CD8-positive, alpha-beta T cell (primary cell): ENCODE measurements at regions of chr6 and their contacts with region 1.

Region 1: DNA sequence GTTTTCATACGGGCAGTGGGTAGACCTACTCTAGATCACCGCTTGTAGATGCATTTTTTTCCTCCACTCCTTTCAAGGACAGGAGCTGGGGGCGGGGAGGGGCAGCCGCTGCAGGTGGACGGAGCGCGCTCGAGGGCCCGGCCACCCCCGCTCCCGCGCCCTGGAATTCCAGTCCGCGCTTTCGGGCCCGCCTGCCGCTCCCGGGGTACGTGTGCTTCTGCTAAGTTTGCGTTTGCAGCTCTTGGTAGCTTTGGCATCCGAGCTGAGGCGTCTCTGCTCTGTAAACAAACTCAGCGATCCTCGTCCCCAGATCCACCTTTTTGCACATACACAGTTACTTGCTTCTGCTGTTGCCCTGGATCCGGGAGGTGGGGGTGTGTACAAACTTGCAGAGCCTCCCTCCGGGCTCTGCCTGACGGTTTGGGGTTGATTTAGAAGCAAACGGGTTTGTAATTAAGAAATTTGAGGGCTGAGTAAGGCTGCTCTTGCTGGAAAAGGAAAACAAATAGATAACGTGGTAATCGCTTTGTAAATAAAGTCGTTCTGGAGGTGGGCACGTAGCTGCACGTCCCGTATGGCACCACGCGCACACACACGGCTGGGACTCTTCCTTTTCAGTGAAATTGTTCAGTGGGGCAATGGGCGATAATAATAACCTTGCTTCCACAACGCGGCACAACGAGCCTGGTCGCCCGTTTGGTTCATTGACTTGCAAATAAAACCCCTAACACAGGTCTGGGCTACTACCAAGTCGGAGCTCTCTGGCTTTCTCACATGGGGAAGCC is 976 bp upstream of the CITED2 start:
- DNase-seq: peak; percentile 71 to 93 (median 83)
- ATAC-seq: peak; percentile 63
- H3K4me3 ChIP-seq: peak overlapping the region; percentile 92 to 93
- H3K4me3 Mint-ChIP-seq: peak overlapping the region; percentile 98
- H3K27ac ChIP-seq: peak overlapping the region; percentile 76 to 94
- H3K27ac Mint-ChIP-seq: peak overlapping the region; percentile 95
- H3K4me1 ChIP-seq: peaks cover 22% of the 10 kb centered on the region
- H3K4me1 Mint-ChIP-seq: peaks cover 26% of the 10 kb centered on the region
- H3K27me3 ChIP-seq: no peaks in the 10 kb centered on the region
- H3K27me3 Mint-ChIP-seq: no peaks in the 10 kb centered on the region
- CTCF ChIP-seq: no peak

Region 2: GRCh38 chr6:138987640-138988468 is 387.6 kb before region 1 on chr6 and contains the start of gene REPS1:
- CTCF ChIA-PET with region 1: interaction called, 18 read pairs
- POLR2A ChIA-PET with region 1: interaction called, 12 read pairs
- intact Hi-C with region 1: loop called in 1 of 2 experiments (anchors 1 kb)
- DNase-seq: peak; percentile 79 to 97 (median 90)
- ATAC-seq: peak; percentile 88
- H3K4me3 ChIP-seq: peak within 1 kb of the TSS; percentile 74 to 79
- H3K4me3 Mint-ChIP-seq: peak within 1 kb of the TSS; percentile 86
- H3K27ac ChIP-seq: peak within 1 kb of the TSS; percentile 68 to 81
- H3K27ac Mint-ChIP-seq: peak within 1 kb of the TSS; percentile 85
- H3K4me1 ChIP-seq: peaks cover 42% of the 10 kb centered on the region
- H3K4me1 Mint-ChIP-seq: peaks cover 6% of the 10 kb centered on the region
- H3K27me3 ChIP-seq: no peaks in the 10 kb centered on the region
- H3K27me3 Mint-ChIP-seq: no peaks in the 10 kb centered on the region
- CTCF ChIP-seq: peak; percentile 99
- total RNA-seq, gene REPS1: 50.4 to 60.3 TPM

Region 3: DNA sequence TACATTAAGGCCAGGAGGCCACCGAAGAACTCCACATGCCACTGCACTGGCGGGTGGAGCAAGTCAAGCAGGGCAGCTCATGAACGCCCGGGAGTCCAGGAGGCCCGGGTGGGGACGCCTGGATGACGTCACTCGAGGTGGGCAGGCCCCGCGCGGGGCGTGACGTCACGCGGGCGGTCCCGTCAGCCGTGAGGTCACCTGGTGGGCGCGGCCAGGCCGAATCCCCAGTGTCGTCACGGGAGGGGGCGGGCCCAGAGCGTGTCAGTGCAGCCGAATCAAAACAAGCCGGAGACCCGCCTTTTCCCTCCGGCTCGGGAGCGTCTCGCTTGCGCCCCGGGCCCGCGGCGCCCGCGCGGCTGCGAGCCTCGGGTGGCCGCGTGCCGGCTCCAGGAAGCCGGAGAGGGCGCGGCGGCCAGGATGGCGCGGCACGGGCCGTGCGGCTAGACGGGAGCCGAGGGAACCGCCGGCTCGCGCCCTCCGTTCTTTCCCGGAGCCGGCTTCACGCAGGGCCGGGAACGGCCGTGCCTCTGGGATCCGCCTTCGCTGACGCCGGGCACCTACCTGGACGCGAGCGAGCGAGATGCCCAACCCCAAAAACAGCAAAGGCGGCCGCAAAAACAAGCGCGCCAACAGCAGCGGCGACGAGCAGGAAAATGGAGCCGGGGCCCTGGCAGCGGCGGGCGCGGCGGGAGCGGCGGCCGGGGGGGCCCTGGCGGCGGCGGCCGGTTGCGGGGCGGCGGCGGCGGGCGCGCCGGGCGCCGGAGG is 240.4 kb before region 1 on chr6 and contains the start of gene HECA:
- CTCF ChIA-PET with region 1: interaction called, 10 read pairs
- POLR2A ChIA-PET with region 1: interaction called, 33 read pairs
- intact Hi-C with region 1: loop called (anchors 1 kb)
- DNase-seq: peak; percentile 98 to 100 (median 99)
- ATAC-seq: peak; percentile 81
- H3K4me3 ChIP-seq: peak within 1 kb of the TSS; percentile 79 to 84
- H3K4me3 Mint-ChIP-seq: peak within 1 kb of the TSS; percentile 91
- H3K27ac ChIP-seq: peak within 1 kb of the TSS; percentile 96 to 97
- H3K27ac Mint-ChIP-seq: peak within 1 kb of the TSS; percentile 98
- H3K4me1 ChIP-seq: peaks cover 55% of the 10 kb centered on the region
- H3K4me1 Mint-ChIP-seq: peaks cover 67% of the 10 kb centered on the region
- H3K27me3 ChIP-seq: no peaks in the 10 kb centered on the region
- H3K27me3 Mint-ChIP-seq: no peaks in the 10 kb centered on the region
- CTCF ChIP-seq: no peak
- total RNA-seq, gene HECA: 231 to 234 TPM

Region 4: DNA sequence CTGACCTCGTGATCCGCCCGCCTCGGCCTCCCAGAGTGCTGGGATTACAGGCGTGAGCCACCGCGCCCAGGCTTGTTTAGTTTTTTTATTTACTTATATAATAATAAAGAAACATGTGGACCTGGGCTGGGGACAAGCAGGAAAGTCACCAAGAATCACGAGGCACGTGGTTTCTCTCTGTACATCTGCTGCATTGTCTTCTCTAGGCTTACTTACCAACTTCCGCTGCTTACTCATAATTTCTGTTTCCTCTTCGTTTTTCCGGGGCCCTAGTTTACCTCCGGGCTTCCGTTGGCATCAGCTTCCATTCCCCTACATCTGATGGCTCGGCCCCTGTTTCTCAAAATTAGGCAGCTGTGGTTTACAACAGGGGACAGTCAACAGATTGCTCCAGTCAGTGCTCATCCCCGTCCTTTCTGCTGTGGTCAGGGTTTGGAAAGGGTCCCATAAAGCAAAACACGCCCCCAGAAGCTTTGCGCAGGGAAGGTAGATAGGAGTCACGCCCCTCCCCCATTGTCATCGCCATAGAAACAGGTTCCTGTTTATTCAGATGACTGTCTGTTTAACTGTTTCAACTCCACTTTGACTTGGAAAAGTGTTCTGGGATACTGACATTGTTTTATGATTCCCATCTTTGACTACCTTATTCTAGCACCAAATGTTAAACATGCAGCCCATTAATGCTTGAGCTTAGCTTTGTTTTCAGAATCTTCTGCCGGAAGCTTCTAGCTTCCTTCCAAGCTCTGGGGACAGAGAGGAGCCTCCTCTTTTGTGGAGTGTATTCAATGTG is 51.7 kb before region 1 on chr6:
- CTCF ChIA-PET with region 1: interaction called, 7 read pairs
- POLR2A ChIA-PET with region 1: interaction called, 13 read pairs
- intact Hi-C with region 1: loop called in 1 of 2 experiments (anchors 2 kb)
- DNase-seq: peak; percentile 56 to 91 (median 84)
- ATAC-seq: peak; percentile 87
- H3K4me3 ChIP-seq: peak overlapping the region; percentile 54 to 59
- H3K4me3 Mint-ChIP-seq: peak overlapping the region; percentile 89
- H3K27ac ChIP-seq: peak overlapping the region; percentile 82 to 97
- H3K27ac Mint-ChIP-seq: peak overlapping the region; percentile 97
- H3K4me1 ChIP-seq: peaks cover 18% of the 10 kb centered on the region
- H3K4me1 Mint-ChIP-seq: peaks cover 35% of the 10 kb centered on the region
- H3K27me3 ChIP-seq: no peaks in the 10 kb centered on the region
- H3K27me3 Mint-ChIP-seq: no peaks in the 10 kb centered on the region
- CTCF ChIP-seq: no peak

Region 5: DNA sequence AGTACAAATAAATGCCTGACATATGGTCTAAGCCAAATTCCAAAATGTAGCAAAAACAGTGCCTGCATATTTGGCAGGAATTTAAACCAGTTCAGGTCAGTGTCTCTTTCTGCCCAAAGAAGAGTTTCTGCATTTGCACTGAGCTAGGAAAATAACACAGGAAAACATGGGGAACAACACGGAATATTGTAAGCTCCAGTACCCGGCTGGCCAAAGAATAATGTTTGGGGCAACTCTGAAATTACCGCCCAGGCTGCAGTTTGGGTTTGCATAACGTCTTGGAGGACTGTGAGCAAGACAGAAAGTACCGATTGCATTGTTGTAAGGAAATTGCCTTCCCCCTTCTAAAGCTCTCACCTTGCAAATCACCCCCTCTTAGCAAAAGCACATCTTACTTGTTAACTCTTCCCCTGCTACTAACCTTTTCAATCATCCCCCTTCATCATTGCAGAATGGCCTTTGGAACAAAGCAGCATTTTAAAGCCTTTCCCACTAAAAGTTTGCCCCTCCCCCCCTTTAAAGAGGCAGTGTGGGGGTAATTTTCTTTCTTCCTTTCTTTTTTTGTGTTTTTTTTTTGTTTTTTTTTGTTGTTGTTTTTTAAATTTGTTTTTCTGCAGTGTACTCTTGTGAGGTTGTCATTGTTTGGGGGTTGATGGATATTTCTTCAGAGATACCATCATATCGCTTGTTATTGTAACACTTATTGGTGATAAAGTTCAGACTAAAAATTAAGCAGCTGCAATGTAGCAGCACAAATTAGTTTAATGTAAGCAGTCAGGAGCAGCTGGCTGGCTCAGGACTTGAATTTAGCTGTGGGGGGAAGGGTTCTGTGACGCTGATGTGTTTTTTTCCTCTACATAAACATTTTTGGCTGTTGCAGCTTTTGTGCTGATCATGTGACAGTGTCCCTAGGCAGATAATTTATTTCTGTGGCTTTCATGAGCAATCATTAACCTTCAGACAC is 99.0 kb after region 1 on chr6:
- CTCF ChIA-PET with region 1: no interaction called
- POLR2A ChIA-PET with region 1: no interaction called
- intact Hi-C with region 1: no loop called
- DNase-seq: no peak
- ATAC-seq: no peak
- H3K4me3 ChIP-seq: no peak overlapping the region
- H3K4me3 Mint-ChIP-seq: no peak overlapping the region
- H3K27ac ChIP-seq: no peak overlapping the region
- H3K27ac Mint-ChIP-seq: no peak overlapping the region
- H3K4me1 ChIP-seq: no peaks in the 10 kb centered on the region
- H3K4me1 Mint-ChIP-seq: peaks cover 4% of the 10 kb centered on the region
- H3K27me3 ChIP-seq: no peaks in the 10 kb centered on the region
- H3K27me3 Mint-ChIP-seq: no peaks in the 10 kb centered on the region
- CTCF ChIP-seq: no peak

Region 6: GRCh38 chr6:139540276-139540675 is 164.9 kb after region 1 on chr6:
- CTCF ChIA-PET with region 1: interaction called, 3 read pairs
- POLR2A ChIA-PET with region 1: interaction called, 18 read pairs
- intact Hi-C with region 1: no loop called
- DNase-seq: peak; percentile 8 to 74 (median 48)
- ATAC-seq: peak; percentile 89
- H3K4me3 ChIP-seq: peak overlapping the region in 1 of 2 experiments; percentile 9
- H3K4me3 Mint-ChIP-seq: peak overlapping the region; percentile 32
- H3K27ac ChIP-seq: peak overlapping the region in 1 of 2 experiments; percentile 85
- H3K27ac Mint-ChIP-seq: peak overlapping the region; percentile 76
- H3K4me1 ChIP-seq: peaks cover 18% of the 10 kb centered on the region
- H3K4me1 Mint-ChIP-seq: peaks cover 33% of the 10 kb centered on the region
- H3K27me3 ChIP-seq: no peaks in the 10 kb centered on the region
- H3K27me3 Mint-ChIP-seq: no peaks in the 10 kb centered on the region
- CTCF ChIP-seq: no peak

Region 7: DNA sequence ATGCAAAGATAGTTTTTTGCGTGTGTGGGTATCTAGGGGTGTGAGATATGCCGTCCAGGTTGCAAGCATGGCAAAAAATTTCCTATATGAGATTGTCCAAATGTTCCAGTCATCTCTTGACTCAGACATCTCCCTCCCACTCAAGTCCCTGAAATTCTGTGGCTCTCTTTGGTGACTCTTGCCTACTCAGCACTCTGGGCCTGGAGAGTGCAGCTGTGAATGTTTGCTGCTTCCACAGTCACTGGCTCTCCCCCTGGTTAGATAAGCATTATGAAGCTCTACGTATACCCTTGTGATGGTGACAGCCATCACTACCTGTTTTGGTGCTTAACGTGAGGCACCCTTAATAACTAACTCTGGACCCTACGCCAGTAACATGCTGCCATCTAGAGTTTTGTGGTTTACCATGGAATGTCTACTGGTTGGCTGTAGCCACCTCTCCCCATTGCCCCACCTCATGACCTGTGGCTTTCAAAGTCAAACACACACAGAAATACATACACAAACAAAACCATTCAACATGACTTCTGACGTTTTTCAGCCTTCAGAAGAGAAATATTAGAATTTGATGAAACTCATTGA is 620.9 kb after region 1 on chr6:
- CTCF ChIA-PET with region 1: no interaction called
- POLR2A ChIA-PET with region 1: no interaction called
- intact Hi-C with region 1: loop called in 1 of 2 experiments (anchors 5 kb)
- DNase-seq: peak in 2 of 9 experiments; percentile 7 to 11
- ATAC-seq: no peak
- H3K4me3 ChIP-seq: no peak overlapping the region
- H3K4me3 Mint-ChIP-seq: no peak overlapping the region
- H3K27ac ChIP-seq: no peak overlapping the region
- H3K27ac Mint-ChIP-seq: no peak overlapping the region
- H3K4me1 ChIP-seq: no peaks in the 10 kb centered on the region
- H3K4me1 Mint-ChIP-seq: no peaks in the 10 kb centered on the region
- H3K27me3 ChIP-seq: no peaks in the 10 kb centered on the region
- H3K27me3 Mint-ChIP-seq: no peaks in the 10 kb centered on the region
- CTCF ChIP-seq: no peak